ENCODE measurements at regions of chr3 and their contacts with region 1.

Region 1: DNA sequence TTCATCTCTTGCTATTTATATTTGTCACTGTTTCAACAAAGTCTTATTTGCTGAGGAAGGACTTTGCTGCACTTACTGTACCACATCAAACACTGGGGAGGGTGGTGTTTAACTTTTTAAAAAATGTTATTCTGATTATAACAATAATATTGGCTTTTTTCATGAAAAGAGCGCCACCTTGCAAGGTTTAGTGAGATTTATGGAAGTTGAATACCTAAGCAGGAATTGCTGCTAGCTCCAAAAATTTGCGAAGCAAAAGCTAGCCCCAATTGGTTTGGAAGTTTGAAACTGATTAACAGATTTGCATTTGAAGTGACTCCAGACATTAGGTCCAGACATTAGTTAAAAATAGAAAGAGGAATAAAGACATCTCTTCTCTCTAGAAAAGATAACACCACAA is 6.7 kb downstream of the ZIC1 start:
- DNase-seq: no peak
- ATAC-seq: no peak
- H3K4me3 Mint-ChIP-seq: no peak overlapping the region
- H3K27ac Mint-ChIP-seq: no peak overlapping the region
- H3K4me1 Mint-ChIP-seq: peaks cover 24% of the 10 kb centered on the region
- H3K27me3 Mint-ChIP-seq: peaks cover 68% of the 10 kb centered on the region
- CTCF ChIP-seq: no peak

Region 2: DNA sequence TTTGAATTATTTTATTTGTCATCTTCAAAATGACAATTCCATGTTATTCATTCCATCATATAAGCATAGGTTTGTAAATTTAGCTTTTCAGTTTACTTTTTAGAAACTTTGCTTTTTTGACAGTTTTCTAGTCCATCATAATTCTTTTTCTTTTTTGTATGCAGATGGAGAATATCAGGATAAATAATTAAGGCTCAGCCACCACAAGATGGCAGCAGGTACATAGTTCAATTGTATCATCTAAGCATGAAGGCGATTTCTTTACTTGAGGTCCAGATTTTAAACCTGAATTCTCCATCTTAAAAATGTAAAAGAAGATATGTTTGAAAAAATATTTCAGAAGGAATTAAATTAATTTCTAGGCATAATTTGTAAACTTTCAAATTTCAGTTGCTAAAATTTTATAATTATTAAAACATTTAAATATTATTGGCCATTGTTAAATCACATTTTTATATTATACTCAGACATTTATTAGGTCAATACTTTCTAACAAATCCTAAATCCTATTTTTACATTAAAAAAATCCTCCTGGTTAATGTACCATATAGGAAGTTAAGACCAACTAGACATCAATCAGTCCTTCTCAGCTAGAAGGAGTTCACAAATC is 825.8 kb before region 1 on chr3:
- CTCF ChIA-PET with region 1: no interaction called
- POLR2A ChIA-PET with region 1: no interaction called
- intact Hi-C with region 1: no loop called
- DNase-seq: no peak
- ATAC-seq: no peak
- H3K4me3 Mint-ChIP-seq: no peak overlapping the region
- H3K27ac Mint-ChIP-seq: no peak overlapping the region
- H3K4me1 Mint-ChIP-seq: no peaks in the 10 kb centered on the region
- H3K27me3 Mint-ChIP-seq: peaks cover 5% of the 10 kb centered on the region
- CTCF ChIP-seq: no peak

Region 3: GRCh38 chr3:147173257-147173656 is 242.6 kb before region 1 on chr3:
- CTCF ChIA-PET with region 1: no interaction called
- POLR2A ChIA-PET with region 1: no interaction called
- intact Hi-C with region 1: no loop called
- DNase-seq: no peak
- ATAC-seq: no peak
- H3K4me3 Mint-ChIP-seq: no peak overlapping the region
- H3K27ac Mint-ChIP-seq: no peak overlapping the region
- H3K4me1 Mint-ChIP-seq: no peaks in the 10 kb centered on the region
- H3K27me3 Mint-ChIP-seq: no peaks in the 10 kb centered on the region
- CTCF ChIP-seq: no peak

Region 4: GRCh38 chr3:147361454-147362420 is 54.1 kb before region 1 on chr3:
- CTCF ChIA-PET with region 1: no interaction called
- POLR2A ChIA-PET with region 1: no interaction called
- intact Hi-C with region 1: no loop called
- DNase-seq: no peak
- ATAC-seq: no peak
- H3K4me3 Mint-ChIP-seq: no peak overlapping the region
- H3K27ac Mint-ChIP-seq: no peak overlapping the region
- H3K4me1 Mint-ChIP-seq: no peaks in the 10 kb centered on the region
- H3K27me3 Mint-ChIP-seq: peaks cover 59% of the 10 kb centered on the region
- CTCF ChIP-seq: no peak

Region 5: GRCh38 chr3:147385059-147386012 is 30.5 kb before region 1 on chr3:
- CTCF ChIA-PET with region 1: no interaction called
- POLR2A ChIA-PET with region 1: no interaction called
- intact Hi-C with region 1: loop called (anchors 2 kb)
- DNase-seq: no peak
- ATAC-seq: no peak
- H3K4me3 Mint-ChIP-seq: no peak overlapping the region
- H3K27ac Mint-ChIP-seq: no peak overlapping the region
- H3K4me1 Mint-ChIP-seq: no peaks in the 10 kb centered on the region
- H3K27me3 Mint-ChIP-seq: peaks cover 84% of the 10 kb centered on the region
- CTCF ChIP-seq: no peak

Region 6: GRCh38 chr3:147447224-147447623 is 31.4 kb after region 1 on chr3:
- CTCF ChIA-PET with region 1: no interaction called
- POLR2A ChIA-PET with region 1: no interaction called
- intact Hi-C with region 1: no loop called
- DNase-seq: no peak
- ATAC-seq: no peak
- H3K4me3 Mint-ChIP-seq: no peak overlapping the region
- H3K27ac Mint-ChIP-seq: no peak overlapping the region
- H3K4me1 Mint-ChIP-seq: no peaks in the 10 kb centered on the region
- H3K27me3 Mint-ChIP-seq: no peaks in the 10 kb centered on the region
- CTCF ChIP-seq: no peak